Mammary epithelial cell (primary cell): ENCODE measurements at regions of chr2 and their contacts with region 1.

Region 1: GRCh38 chr2:75548036-75548573 is 12.6 kb downstream of the EVA1A start:
- DNase-seq: no peak
- H3K4me3 ChIP-seq: no peak overlapping the region
- H3K27ac ChIP-seq: no peak overlapping the region
- H3K4me1 ChIP-seq: peaks cover 9% of the 10 kb centered on the region
- H3K27me3 ChIP-seq: no peaks in the 10 kb centered on the region
- CTCF ChIP-seq: no peak

Region 2: DNA sequence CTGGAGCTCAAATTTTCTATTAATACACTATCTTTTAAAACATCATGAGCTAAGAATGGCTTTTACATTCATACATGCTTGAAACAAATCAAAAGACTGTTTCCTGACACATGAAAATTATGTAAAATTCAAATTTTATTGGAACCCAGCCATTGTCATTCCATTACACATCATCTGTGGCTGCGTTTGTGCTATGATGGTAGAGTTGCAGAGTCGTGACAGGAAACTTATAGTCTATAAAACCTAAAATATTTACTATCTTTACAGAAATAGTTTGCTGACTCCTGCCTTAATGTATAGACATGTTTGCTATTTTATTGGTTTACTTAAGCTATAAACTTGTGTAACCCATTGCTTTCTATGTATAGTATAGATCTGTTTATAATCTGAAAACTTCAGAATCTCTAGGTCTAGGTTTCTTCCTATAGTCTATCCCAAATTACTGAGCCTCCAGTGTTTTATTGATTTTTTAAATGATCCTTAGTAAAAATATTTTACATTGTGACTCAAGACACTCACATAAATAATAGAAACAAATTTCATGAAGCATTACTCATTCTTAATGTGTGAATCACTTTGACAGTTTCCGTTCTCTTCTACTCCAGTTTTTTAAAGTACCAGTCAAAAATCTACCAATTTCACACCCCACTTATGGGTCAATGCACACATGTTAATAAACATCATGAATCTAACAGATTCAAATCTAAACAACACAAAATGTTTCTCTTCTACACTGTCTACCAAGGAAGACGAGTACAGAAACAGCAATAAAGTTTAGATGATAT is 72.0 kb after region 1 on chr2:
- CTCF ChIA-PET with region 1: no interaction called
- dilution Hi-C with region 1: loop called (anchors 5 kb)
- in situ Hi-C with region 1: no loop called
- intact Hi-C with region 1: no loop called
- DNase-seq: peak; percentile 53
- H3K4me3 ChIP-seq: peak overlapping the region in 1 of 3 experiments; percentile 5
- H3K27ac ChIP-seq: peak overlapping the region; percentile 43
- H3K4me1 ChIP-seq: peaks cover 15% of the 10 kb centered on the region
- H3K27me3 ChIP-seq: no peaks in the 10 kb centered on the region
- CTCF ChIP-seq: no peak

Region 3: DNA sequence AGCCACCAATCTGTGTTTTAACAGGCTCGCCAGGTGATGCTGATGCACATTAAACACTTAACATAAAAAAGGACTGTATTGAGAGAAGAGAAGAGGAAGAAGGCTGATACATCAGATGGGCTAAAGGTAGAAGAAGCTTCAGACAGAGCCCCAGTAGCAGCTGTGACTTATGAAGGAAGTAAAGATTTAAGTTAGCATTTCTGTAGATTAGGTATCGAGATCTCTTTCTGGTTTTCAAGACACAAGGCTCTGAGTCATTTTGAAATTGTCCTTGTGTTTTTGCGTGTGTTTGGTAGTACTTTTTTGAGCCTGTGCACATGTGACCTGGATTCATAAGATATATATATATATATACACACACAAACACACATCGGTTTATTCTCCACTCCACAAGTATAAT is 203.3 kb after region 1 on chr2:
- CTCF ChIA-PET with region 1: no interaction called
- dilution Hi-C with region 1: no loop called
- in situ Hi-C with region 1: no loop called
- intact Hi-C with region 1: no loop called
- DNase-seq: no peak
- H3K4me3 ChIP-seq: no peak overlapping the region
- H3K27ac ChIP-seq: no peak overlapping the region
- H3K4me1 ChIP-seq: no peaks in the 10 kb centered on the region
- H3K27me3 ChIP-seq: peaks cover 2% of the 10 kb centered on the region
- CTCF ChIP-seq: no peak

Region 4: DNA sequence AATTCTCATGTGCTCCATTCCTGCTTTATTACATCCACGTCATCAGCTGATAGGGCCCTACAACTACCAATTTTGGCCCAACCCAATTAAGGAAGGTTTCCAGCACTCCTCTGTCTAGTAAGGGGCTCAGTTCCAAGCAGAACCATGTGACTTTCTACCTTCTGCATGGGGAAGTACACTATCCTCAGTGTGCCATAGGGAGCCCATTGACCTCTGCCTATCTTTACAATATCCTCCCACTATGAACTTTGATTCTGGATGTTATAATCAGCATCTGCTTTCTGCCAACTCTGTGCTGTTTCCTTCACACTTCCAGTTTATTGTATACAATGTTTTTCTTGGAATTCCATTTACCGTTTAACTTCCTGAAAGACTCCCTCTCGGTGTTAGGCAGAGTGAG is 216.5 kb after region 1 on chr2:
- CTCF ChIA-PET with region 1: no interaction called
- dilution Hi-C with region 1: no loop called
- in situ Hi-C with region 1: no loop called
- intact Hi-C with region 1: no loop called
- DNase-seq: no peak
- H3K4me3 ChIP-seq: no peak overlapping the region
- H3K27ac ChIP-seq: no peak overlapping the region
- H3K4me1 ChIP-seq: no peaks in the 10 kb centered on the region
- H3K27me3 ChIP-seq: no peaks in the 10 kb centered on the region
- CTCF ChIP-seq: no peak

Region 5: GRCh38 chr2:75787532-75788132 is 239.5 kb after region 1 on chr2:
- CTCF ChIA-PET with region 1: no interaction called
- dilution Hi-C with region 1: no loop called
- in situ Hi-C with region 1: no loop called
- intact Hi-C with region 1: no loop called
- DNase-seq: peak; percentile 17
- H3K4me3 ChIP-seq: no peak overlapping the region
- H3K27ac ChIP-seq: no peak overlapping the region
- H3K4me1 ChIP-seq: no peaks in the 10 kb centered on the region
- H3K27me3 ChIP-seq: no peaks in the 10 kb centered on the region
- CTCF ChIP-seq: peak; percentile 48 to 53